ENCODE measurements at regions of chr12 and their contacts with region 1.

Region 1: GRCh38 chr12:85457016-85457415 is 177.0 kb downstream of the ALX1 start:
- DNase-seq: no peak
- ATAC-seq: no peak
- H3K4me3 Mint-ChIP-seq: no peak overlapping the region
- H3K27ac Mint-ChIP-seq: no peak overlapping the region
- H3K4me1 Mint-ChIP-seq: no peaks in the 10 kb centered on the region
- H3K27me3 Mint-ChIP-seq: no peaks in the 10 kb centered on the region

Region 2: DNA sequence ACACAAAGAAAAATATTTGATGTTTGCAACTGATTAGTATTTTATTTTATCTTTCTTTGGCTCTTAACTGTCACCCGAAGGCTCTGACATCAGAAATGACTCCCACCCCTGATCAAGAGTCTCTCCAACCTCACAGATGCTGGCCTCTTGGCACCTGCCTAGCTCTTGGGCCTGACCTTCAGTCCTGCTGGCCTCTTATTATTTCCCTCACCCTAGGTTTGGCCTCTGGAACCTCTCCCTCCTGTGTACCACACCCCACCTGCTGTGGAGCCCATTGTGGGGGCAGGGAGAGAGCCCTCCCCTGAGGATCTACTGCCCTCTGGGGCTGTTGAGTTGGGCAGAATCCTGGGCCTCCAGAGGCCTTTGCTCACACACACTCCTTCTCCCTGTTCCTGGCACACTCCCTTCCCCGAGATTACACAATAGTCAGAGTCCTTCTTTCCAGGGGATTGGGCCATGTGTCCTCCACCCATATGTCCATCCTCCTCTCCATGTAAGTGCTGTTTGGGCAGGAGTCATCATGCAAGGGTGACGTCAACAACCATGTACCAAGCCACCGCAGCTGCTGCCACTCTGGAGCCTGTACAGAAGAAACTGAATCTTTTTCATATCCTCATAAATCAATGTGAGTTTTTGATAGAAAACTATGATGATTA is 254.8 kb after region 1 on chr12:
- CTCF ChIA-PET with region 1: no interaction called
- POLR2A ChIA-PET with region 1: no interaction called
- intact Hi-C with region 1: no loop called
- DNase-seq: no peak
- ATAC-seq: no peak
- H3K4me3 Mint-ChIP-seq: no peak overlapping the region
- H3K27ac Mint-ChIP-seq: no peak overlapping the region
- H3K4me1 Mint-ChIP-seq: no peaks in the 10 kb centered on the region
- H3K27me3 Mint-ChIP-seq: no peaks in the 10 kb centered on the region

Region 3: DNA sequence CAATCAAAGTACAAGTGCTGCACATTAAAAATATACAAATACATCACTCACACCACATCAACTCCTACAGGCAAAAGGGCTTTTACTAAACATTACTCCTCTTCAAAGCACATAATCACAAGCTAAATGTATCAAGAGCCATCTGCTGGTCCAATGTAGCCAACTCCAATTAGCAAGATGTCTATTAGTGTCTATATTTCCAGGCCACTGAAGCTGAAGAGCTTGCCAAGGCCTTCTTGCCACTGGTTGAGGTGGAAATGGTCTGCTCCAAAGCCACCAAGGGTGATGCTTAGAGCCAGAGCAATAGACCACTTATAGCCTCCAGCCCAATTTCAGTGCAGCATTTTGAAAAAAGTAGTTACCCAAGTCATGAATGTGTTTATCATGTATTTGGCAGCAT is 324.8 kb after region 1 on chr12:
- CTCF ChIA-PET with region 1: no interaction called
- POLR2A ChIA-PET with region 1: no interaction called
- intact Hi-C with region 1: loop called in 1 of 2 experiments (anchors 10 kb)
- DNase-seq: no peak
- ATAC-seq: no peak
- H3K4me3 Mint-ChIP-seq: no peak overlapping the region
- H3K27ac Mint-ChIP-seq: no peak overlapping the region
- H3K4me1 Mint-ChIP-seq: no peaks in the 10 kb centered on the region
- H3K27me3 Mint-ChIP-seq: no peaks in the 10 kb centered on the region

Region 4: GRCh38 chr12:86134561-86134960 is 677.5 kb after region 1 on chr12:
- CTCF ChIA-PET with region 1: no interaction called
- POLR2A ChIA-PET with region 1: no interaction called
- intact Hi-C with region 1: no loop called
- DNase-seq: no peak
- ATAC-seq: no peak
- H3K4me3 Mint-ChIP-seq: no peak overlapping the region
- H3K27ac Mint-ChIP-seq: no peak overlapping the region
- H3K4me1 Mint-ChIP-seq: no peaks in the 10 kb centered on the region
- H3K27me3 Mint-ChIP-seq: no peaks in the 10 kb centered on the region